ENCODE measurements at regions of chr1 and their contacts with region 1.

Region 1: DNA sequence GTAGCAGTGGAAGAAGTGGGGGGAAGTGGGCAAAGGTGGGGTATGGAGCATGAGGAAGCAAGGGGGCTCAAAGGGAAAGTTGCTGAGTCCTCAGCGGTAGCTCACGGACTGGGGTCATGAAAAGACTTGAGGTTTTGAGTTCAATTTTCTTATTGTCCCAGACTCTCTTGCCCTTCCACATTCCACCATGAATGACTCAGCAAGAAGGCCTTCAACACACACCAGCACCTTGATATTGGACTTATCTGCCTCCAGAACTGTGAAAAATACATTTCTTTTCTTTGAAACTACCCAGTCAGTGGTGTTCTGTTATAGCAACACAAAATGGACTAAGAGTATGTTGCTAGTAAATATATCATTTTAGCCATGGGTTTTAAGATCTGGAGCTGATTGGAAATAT is 17.3 kb upstream of the RHBDL2 start:
- DNase-seq: no peak
- ATAC-seq: no peak
- H3K4me3 ChIP-seq: no peak overlapping the region
- H3K4me3 Mint-ChIP-seq: no peak overlapping the region
- H3K27ac ChIP-seq: no peak overlapping the region
- H3K27ac Mint-ChIP-seq: no peak overlapping the region
- H3K4me1 ChIP-seq: no peaks in the 10 kb centered on the region
- H3K4me1 Mint-ChIP-seq: no peaks in the 10 kb centered on the region
- H3K27me3 ChIP-seq: no peaks in the 10 kb centered on the region
- H3K27me3 Mint-ChIP-seq: peaks cover 16% of the 10 kb centered on the region
- CTCF ChIP-seq: no peak

Region 2: GRCh38 chr1:38541223-38541622 is 417.7 kb before region 1 on chr1:
- CTCF ChIA-PET with region 1: no interaction called
- POLR2A ChIA-PET with region 1: no interaction called
- intact Hi-C with region 1: no loop called
- DNase-seq: no peak
- ATAC-seq: no peak
- H3K4me3 ChIP-seq: no peak overlapping the region
- H3K4me3 Mint-ChIP-seq: no peak overlapping the region
- H3K27ac ChIP-seq: no peak overlapping the region
- H3K27ac Mint-ChIP-seq: no peak overlapping the region
- H3K4me1 ChIP-seq: no peaks in the 10 kb centered on the region
- H3K4me1 Mint-ChIP-seq: peaks cover 6% of the 10 kb centered on the region
- H3K27me3 ChIP-seq: peaks cover 0 to 2% (median 0%) of the 10 kb centered on the region in 4 experiments
- H3K27me3 Mint-ChIP-seq: peaks cover 5% of the 10 kb centered on the region
- CTCF ChIP-seq: no peak

Region 3: DNA sequence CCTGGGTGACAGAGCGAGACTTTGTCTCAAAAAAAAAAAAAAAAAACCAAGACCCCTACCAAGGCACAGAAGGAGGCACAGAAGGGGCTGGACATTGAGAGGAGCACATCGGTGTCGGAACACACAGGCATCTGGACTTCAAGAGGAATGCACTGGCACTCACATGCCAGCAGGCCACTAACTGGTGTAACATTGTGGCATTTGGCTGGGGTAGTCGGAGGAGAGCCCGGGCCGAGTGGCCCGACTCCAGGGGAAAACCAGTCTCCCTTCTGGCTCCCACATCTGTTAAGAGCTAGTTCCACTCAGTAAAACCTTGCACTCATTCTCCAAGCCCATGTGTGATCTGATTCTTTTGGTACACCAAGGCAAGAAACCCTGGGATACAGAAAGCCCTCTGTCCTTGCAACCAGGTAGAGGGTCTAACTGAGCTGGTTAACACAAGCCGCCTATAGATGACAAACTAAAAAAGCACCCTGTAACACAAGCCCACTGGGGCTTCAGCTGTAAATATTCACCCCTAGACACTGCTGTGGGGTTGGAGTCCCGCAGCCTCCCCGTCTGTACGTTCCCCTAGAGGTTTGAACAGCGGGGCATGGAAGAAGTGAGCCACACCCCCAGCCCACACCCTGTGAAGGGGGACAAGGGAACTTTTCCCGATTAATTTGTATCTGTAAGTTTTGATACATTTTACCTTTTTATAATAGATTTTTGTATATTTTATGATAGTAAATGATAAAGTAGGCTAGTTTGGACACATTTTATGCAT is 14.9 kb after region 1 on chr1:
- CTCF ChIA-PET with region 1: no interaction called
- POLR2A ChIA-PET with region 1: interaction called, 13 read pairs
- intact Hi-C with region 1: no loop called
- DNase-seq: no peak
- ATAC-seq: no peak
- H3K4me3 ChIP-seq: no peak overlapping the region
- H3K4me3 Mint-ChIP-seq: no peak overlapping the region
- H3K27ac ChIP-seq: no peak overlapping the region
- H3K27ac Mint-ChIP-seq: no peak overlapping the region
- H3K4me1 ChIP-seq: no peaks in the 10 kb centered on the region
- H3K4me1 Mint-ChIP-seq: no peaks in the 10 kb centered on the region
- H3K27me3 ChIP-seq: no peaks in the 10 kb centered on the region
- H3K27me3 Mint-ChIP-seq: no peaks in the 10 kb centered on the region
- CTCF ChIP-seq: no peak